ENCODE measurements at regions of chr6 and their contacts with region 1.

Region 1: DNA sequence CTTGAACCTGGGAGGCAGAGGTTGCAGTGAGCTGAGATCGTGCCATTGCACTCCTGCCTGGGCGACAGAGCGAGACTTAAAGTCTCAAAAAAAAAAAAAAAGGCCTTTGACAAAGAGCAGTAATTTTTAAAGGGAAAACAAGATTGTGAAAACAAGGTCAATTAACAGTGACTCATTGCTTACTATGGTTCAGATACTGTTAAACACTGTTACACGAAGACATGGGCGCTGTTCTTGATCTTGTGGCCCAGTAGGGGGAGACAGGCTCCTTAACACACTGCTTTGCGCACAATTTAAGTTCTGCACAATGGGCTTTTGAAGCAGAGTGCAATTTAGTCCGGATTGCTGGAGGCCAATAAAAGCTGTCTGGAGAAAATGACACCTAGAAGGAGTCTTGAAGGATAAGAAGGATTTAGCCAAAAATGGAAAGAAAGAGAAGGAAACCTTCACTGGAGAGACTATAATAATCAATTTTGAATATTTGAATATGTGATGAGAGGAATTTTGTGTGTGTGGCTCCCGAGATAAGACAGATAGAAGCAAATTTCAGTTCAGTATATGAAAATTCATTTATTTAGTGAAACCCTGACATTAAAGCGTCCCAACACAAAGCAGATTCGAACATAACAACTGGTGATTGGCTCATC is 6.0 kb upstream of the LATS1 start:
- H3K4me3 ChIP-seq: no peak overlapping the region
- H3K27ac ChIP-seq: no peak overlapping the region
- H3K4me1 ChIP-seq: no peaks in the 10 kb centered on the region
- CTCF ChIP-seq: peak; percentile 55

Region 2: GRCh38 chr6:149429427-149430360 is 294.2 kb before region 1 on chr6:
- CTCF ChIA-PET with region 1: no interaction called
- POLR2A ChIA-PET with region 1: no interaction called
- H3K4me3 ChIP-seq: no peak overlapping the region
- H3K27ac ChIP-seq: no peak overlapping the region
- H3K4me1 ChIP-seq: no peaks in the 10 kb centered on the region
- CTCF ChIP-seq: no peak

Region 3: GRCh38 chr6:149746147-149746946 is 22.5 kb after region 1 on chr6 and contains the start of gene NUP43:
- CTCF ChIA-PET with region 1: interaction called, 12 read pairs
- POLR2A ChIA-PET with region 1: interaction called, 35 read pairs
- H3K4me3 ChIP-seq: peak within 1 kb of the TSS; percentile 78
- H3K27ac ChIP-seq: peak within 1 kb of the TSS; percentile 86
- H3K4me1 ChIP-seq: no peaks in the 10 kb centered on the region
- CTCF ChIP-seq: peak; percentile 85